AG04450 (cell line): ENCODE measurements at regions of chr3 and their contacts with region 1.

Region 1: DNA sequence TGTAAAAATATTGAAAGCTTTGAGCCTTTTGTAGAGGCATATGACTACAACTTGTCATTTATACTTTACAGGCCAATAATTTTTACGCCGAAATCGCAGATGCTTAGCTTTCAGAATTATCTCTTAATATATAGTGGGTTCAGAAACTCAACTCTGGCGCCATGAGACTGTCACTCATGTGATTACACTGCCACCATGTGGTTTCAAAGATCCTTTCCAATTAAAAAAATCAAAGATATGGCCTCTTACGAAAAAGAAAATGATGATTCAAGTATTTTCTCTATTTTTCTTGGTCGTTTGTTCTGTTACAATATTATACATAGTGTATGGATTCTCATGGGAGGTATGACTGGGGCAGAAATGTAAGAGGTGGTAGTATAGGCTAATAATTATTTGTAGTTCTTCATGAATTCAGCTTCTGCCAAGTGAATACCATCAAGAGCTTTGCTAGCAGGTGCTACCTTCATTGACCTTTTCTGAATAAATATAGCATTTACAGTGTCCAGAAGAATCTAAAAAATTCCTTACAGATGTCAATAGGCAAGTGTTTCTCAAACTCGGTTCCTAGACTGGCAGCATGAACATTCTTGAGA is 751.7 kb upstream of the GOLIM4 start:
- DNase-seq: peak; percentile 2
- H3K4me3 ChIP-seq: no peak overlapping the region
- H3K27ac ChIP-seq: no peak overlapping the region
- H3K27me3 ChIP-seq: peaks cover 3% of the 10 kb centered on the region
- CTCF ChIP-seq: peak; percentile 74

Region 2: GRCh38 chr3:168165390-168166269 is 681.8 kb before region 1 on chr3:
- CTCF ChIA-PET with region 1: interaction called, 11 read pairs
- POLR2A ChIA-PET with region 1: no interaction called
- DNase-seq: peak; percentile 60
- H3K4me3 ChIP-seq: no peak overlapping the region
- H3K27ac ChIP-seq: no peak overlapping the region
- H3K27me3 ChIP-seq: no peaks in the 10 kb centered on the region
- CTCF ChIP-seq: peak; percentile 72

Region 3: GRCh38 chr3:168213920-168214319 is 633.5 kb before region 1 on chr3:
- CTCF ChIA-PET with region 1: interaction called, 138 read pairs
- POLR2A ChIA-PET with region 1: no interaction called
- DNase-seq: no peak
- H3K4me3 ChIP-seq: no peak overlapping the region
- H3K27ac ChIP-seq: no peak overlapping the region
- H3K27me3 ChIP-seq: no peaks in the 10 kb centered on the region
- CTCF ChIP-seq: no peak

Region 4: GRCh38 chr3:168467115-168467714 is 380.2 kb before region 1 on chr3:
- CTCF ChIA-PET with region 1: interaction called, 21 read pairs
- POLR2A ChIA-PET with region 1: no interaction called
- DNase-seq: peak; percentile 42
- H3K4me3 ChIP-seq: no peak overlapping the region
- H3K27ac ChIP-seq: no peak overlapping the region
- H3K27me3 ChIP-seq: no peaks in the 10 kb centered on the region
- CTCF ChIP-seq: peak; percentile 68

Region 5: DNA sequence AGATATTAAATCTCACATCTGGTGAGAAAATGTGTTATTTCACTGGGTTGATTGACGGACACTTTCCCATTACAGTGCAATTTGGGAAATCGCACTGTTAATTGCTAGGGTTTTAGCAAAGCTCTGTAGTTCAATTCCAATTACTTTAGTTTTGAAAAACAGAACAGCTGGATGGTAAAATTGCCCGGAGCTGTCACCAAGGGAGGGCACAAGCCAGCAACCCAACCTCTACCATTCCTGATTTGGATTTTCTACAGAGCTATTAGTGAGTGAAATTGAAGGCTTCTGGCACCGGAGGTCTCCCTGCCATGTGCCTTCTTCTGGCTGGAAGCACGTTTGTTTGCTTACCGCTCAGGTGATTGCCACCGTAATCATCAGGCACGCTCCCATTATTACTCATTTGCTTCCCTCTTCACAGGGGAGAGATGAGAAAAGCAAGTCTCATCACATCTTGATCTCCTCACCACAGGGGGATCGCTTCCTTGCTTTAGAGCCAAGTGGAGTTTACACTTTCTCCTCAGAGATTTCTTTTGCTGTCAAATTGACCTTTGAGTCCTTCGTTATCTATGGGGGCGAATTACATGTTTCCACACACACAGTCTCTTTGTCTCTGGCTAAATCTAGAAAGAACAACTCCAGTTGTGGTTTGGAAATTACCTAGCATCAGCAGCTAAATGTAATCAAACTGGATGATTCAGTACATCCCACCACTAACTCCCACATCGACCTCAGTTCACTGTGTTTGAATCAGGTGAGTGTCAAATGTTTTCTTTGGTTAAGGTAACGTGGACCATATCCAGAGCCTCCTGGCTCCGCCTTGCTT is 329.9 kb before region 1 on chr3:
- CTCF ChIA-PET with region 1: interaction called, 17 read pairs
- POLR2A ChIA-PET with region 1: no interaction called
- DNase-seq: no peak
- H3K4me3 ChIP-seq: no peak overlapping the region
- H3K27ac ChIP-seq: no peak overlapping the region
- H3K27me3 ChIP-seq: no peaks in the 10 kb centered on the region
- CTCF ChIP-seq: no peak

Region 6: DNA sequence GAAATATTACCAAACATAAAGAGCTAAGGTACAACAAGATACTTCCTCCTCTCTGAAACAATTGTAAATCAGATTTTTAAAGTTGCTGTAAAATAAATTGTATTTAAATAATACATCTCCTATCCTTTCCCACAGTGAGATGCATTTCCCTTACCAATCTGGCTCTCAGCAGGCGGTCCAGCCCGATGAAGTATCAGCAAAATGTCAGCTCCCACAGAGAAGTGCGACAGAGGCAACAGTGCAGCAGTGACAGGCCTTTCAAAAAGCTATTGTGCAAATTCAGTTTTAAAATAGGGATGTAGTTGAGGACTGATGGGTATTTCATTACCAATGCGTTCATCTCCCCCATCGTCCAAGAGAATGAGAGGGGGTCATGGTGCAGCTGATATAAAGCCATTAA is 18.4 kb before region 1 on chr3:
- CTCF ChIA-PET with region 1: interaction called, 16 read pairs
- POLR2A ChIA-PET with region 1: no interaction called
- DNase-seq: no peak
- H3K4me3 ChIP-seq: no peak overlapping the region
- H3K27ac ChIP-seq: no peak overlapping the region
- H3K27me3 ChIP-seq: no peaks in the 10 kb centered on the region
- CTCF ChIP-seq: no peak